ENCODE measurements at regions of chr15 and their contacts with region 1.

Region 1: GRCh38 chr15:44682211-44682610 is 18.7 kb upstream of the SPG11 start:
- DNase-seq: no peak
- ATAC-seq: peak; percentile 75
- H3K4me3 Mint-ChIP-seq: peak overlapping the region; percentile 50
- H3K27ac Mint-ChIP-seq: peak overlapping the region; percentile 92
- H3K4me1 Mint-ChIP-seq: peaks cover 72% of the 10 kb centered on the region
- H3K27me3 Mint-ChIP-seq: no peaks in the 10 kb centered on the region

Region 2: DNA sequence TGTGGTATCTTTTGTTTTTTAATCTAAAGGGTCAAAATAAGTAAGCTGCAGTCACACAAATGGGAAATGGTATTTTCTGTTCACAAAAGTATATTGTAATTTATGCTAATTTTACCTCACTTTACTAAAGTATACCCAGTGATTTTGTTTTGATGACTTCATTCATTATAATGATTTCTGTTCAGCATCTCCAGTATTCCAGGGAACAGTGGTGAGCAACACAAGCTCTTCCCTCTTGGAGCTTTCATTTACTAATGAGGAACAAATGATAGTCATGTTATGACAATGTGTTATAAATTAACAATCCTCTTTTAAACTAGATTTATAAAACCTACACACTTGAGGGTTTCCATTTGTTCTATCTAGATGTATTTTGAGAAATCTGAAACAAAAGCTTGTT is 165.8 kb before region 1 on chr15:
- CTCF ChIA-PET with region 1: no interaction called
- POLR2A ChIA-PET with region 1: no interaction called
- intact Hi-C with region 1: no loop called
- DNase-seq: no peak
- ATAC-seq: no peak
- H3K4me3 Mint-ChIP-seq: no peak overlapping the region
- H3K27ac Mint-ChIP-seq: no peak overlapping the region
- H3K4me1 Mint-ChIP-seq: no peaks in the 10 kb centered on the region
- H3K27me3 Mint-ChIP-seq: no peaks in the 10 kb centered on the region

Region 3: GRCh38 chr15:44694416-44694815 is 12.2 kb after region 1 on chr15:
- CTCF ChIA-PET with region 1: interaction called, 6 read pairs
- POLR2A ChIA-PET with region 1: interaction called, 8 read pairs
- intact Hi-C with region 1: loop called in 1 of 2 experiments (anchors 2 kb)
- DNase-seq: no peak
- ATAC-seq: no peak
- H3K4me3 Mint-ChIP-seq: no peak overlapping the region
- H3K27ac Mint-ChIP-seq: no peak overlapping the region
- H3K4me1 Mint-ChIP-seq: peaks cover 13% of the 10 kb centered on the region
- H3K27me3 Mint-ChIP-seq: no peaks in the 10 kb centered on the region